GM10248 (cell line): ENCODE measurements at regions of chr2 and their contacts with region 1.

Region 1: DNA sequence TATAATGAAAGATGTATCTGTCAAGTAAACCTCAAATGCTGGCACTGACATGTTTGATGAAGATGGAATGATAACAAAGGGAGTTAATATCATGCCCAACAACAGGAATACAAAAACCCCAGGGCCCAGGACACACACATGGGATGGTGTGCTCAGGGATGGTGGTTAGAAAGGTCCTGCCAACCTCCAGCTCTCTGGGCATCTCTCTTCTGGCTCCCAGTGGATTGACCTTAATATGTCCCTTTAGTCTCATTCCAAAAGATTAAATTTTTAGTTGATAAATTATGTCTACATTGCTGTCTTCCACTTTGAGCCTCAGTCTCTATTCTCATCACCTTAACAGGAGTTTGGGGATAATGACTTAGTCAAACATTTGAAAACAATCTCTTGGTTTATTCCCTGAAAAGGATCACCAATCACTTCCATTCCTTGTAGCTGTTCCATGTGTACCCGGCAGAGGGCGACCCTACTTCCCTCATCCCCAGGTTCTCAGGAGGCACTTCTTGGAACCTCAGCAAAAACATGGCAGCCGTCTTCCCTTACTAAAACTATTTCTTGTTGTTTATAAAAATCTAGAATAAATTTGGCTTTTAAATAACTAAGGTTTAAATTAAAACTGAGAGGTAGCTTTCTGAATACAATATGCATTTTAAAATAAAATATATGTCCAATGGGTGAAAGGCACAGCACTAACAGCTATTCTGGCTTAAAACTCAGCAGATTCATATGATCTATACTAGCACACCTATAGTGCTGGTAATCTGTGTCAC is 29.6 kb downstream of the MCEE start:
- DNase-seq: peak; percentile 61
- CTCF ChIP-seq: peak; percentile 72

Region 2: GRCh38 chr2:70686577-70687460 is 413.6 kb before region 1 on chr2:
- CTCF ChIA-PET with region 1: no interaction called
- POLR2A ChIA-PET with region 1: no interaction called
- DNase-seq: peak; percentile 72
- CTCF ChIP-seq: peak; percentile 42

Region 3: DNA sequence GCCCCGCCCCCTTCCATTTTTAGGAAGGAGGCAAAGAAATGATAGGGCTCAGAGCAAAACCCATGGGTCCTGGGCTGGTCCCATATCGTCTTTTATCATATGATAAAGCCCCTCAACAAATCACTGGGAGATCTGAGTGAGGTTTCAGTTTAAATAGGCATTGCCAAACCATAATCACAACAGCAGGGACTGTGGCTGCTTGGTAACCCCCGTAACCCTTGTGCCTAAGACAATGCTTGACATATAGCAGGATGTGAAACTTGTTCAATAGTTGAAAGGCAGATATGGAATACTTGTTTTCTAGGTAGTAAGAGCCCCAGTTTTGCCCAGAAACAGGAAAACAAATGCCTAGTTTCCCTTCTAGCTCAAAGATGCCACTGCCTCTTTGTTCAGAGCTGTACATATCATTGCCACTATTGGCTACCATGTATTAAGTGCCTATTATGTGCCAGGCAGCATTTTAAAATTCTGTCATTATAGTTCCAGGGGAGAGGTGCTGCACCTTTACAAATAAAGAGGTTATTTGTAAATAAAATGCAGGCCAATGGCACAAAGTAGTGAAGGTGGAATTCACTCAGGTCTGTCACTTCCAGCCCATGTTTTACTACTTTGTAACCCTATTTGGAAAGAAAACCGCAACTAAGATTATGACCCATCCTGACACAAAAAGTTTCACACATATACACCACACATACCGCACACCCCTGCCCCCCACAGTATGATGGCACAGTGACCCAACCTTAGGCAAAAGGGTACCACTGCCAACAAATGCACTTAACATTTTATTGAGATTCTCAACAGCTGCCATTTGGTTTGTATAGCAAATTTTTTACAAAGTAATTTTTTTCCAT is 17.8 kb before region 1 on chr2:
- CTCF ChIA-PET with region 1: interaction called, 22 read pairs
- POLR2A ChIA-PET with region 1: interaction called, 3 read pairs
- DNase-seq: no peak
- CTCF ChIP-seq: no peak

Region 4: DNA sequence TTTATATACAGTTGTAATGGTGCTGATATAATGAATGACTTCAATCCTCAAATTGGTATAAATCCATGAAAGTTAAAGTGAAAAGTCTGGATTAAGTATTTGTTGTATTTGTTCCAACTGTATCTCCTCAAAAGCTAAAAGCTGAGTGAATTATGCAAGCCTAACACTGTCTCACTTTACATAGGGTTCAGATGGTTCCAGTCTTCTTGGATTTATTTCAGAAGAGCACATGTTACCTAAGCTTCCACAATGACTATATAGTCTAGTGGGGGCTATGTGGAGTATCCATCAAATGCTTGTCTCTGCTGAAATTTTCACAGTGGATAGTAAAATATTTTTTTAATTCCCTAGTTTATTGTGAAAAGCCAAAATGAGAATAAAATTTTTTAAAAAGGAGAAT is 16.7 kb after region 1 on chr2:
- CTCF ChIA-PET with region 1: interaction called, 33 read pairs
- POLR2A ChIA-PET with region 1: interaction called, 4 read pairs
- DNase-seq: no peak
- CTCF ChIP-seq: no peak

Region 5: DNA sequence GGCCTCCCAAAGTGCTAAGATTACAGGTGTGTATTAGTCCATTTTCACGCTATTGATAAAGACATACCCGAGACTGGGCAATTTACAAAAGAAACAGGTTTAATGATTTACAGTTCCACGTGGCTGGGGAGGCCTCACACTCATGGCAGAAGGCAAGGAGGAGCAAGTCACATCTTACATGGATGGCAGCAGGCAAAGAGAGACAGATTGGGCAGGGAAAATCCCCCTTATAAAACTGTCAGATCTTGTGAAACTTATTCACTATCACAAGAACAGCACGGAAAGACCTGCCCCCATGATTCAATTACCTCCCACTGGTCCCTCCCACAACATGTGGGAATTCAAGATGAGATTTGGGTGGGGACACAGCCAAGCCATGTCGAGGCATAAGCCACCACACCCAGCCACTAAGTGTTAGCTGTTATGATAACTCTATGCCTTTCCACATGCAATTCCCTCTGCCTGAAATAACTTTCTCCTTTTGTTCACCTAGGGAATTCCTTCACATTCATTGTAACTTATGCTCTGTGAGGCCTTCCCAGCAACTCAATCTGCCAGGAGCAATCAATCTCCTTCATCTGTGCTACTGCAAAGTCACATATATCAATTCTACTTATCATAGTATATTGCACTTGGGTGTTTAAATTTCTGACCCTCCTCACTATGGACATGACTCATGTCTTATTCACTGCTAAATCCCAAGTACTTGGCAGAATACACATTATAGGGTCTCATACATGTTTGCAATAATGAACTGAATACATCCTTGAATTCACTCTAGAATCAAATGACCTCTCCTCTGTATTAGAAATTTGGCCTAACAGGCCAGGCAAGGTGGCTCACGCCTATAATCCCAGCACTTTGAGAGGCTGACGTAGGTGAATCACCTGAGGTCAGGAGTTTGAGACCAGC is 22.3 kb after region 1 on chr2:
- CTCF ChIA-PET with region 1: interaction called, 26 read pairs
- POLR2A ChIA-PET with region 1: interaction called, 4 read pairs
- DNase-seq: no peak
- CTCF ChIP-seq: no peak

Region 6: GRCh38 chr2:71150082-71150816 is 49.9 kb after region 1 on chr2:
- CTCF ChIA-PET with region 1: interaction called, 43 read pairs
- POLR2A ChIA-PET with region 1: no interaction called
- DNase-seq: no peak
- CTCF ChIP-seq: no peak

Region 7: GRCh38 chr2:71157124-71157793 is 56.9 kb after region 1 on chr2:
- CTCF ChIA-PET with region 1: interaction called, 43 read pairs
- POLR2A ChIA-PET with region 1: no interaction called
- DNase-seq: peak; percentile 63
- CTCF ChIP-seq: peak; percentile 63